ENCODE measurements at regions of chr1 and their contacts with region 1.

Region 1: GRCh38 chr1:109191377-109191776 is 22.3 kb upstream of the SARS1 start:
- DNase-seq: no peak
- ATAC-seq: no peak

Region 2: DNA sequence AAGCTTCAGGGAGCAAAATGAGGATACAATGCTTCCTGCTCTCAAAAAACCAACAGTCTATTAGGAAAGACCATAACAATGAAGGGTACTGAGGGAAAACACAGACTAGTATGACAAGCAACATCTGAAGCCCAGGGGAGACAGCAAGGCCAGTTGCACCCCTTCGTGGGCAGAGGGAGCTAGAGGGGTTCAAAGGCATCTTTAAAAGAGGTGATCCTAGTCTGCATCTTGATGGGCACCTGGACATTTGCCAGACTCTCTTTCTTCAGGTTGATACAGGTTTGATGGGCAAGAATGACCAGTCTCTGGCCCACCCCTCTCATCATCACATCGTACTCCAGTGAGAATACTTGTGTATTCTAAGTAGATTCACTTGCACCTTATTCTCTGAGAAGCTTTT is 1404.1 kb before region 1 on chr1:
- intact Hi-C with region 1: no loop called
- DNase-seq: no peak
- ATAC-seq: no peak

Region 3: GRCh38 chr1:108933944-108934343 is 257.4 kb before region 1 on chr1:
- intact Hi-C with region 1: no loop called
- DNase-seq: no peak
- ATAC-seq: no peak

Region 4: DNA sequence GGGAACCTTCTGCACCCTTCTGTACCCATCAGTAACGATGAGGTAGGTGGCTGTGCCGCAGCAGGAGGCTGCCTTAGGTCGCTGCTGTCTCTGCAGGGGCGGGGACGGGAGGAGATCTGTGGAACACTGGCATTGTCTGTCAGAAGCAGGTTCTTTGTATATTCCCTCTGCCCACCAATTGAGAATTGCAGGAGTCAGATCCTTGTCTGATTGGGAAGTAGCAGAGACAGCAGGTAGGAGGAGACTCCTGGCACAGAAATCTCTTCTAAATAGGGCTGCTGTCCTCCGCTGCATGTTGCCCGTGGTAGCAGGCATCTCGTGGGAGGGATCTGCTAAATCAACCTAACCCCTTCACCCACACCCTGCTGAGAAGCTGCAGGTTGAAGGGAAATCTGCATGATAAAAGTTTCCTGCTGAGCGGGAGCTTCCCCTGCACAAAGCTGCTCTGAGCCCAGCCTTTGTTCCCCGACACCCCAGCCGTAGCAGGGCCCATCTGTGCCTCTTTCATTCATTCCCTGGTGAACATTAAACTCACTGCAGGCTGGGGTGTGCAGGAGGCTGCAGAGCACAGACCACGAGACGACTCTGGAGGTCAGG is 38.3 kb after region 1 on chr1:
- intact Hi-C with region 1: loop called (anchors 1 kb)
- DNase-seq: no peak
- ATAC-seq: no peak

Region 5: GRCh38 chr1:109385417-109385816 is 194.0 kb after region 1 on chr1:
- intact Hi-C with region 1: no loop called
- DNase-seq: no peak
- ATAC-seq: peak; percentile 84

Measured in sciatic nerve (tissue), 2 donors.